GM12878 (cell line): ENCODE measurements at regions of chr10 and their contacts with region 1.

Region 1: DNA sequence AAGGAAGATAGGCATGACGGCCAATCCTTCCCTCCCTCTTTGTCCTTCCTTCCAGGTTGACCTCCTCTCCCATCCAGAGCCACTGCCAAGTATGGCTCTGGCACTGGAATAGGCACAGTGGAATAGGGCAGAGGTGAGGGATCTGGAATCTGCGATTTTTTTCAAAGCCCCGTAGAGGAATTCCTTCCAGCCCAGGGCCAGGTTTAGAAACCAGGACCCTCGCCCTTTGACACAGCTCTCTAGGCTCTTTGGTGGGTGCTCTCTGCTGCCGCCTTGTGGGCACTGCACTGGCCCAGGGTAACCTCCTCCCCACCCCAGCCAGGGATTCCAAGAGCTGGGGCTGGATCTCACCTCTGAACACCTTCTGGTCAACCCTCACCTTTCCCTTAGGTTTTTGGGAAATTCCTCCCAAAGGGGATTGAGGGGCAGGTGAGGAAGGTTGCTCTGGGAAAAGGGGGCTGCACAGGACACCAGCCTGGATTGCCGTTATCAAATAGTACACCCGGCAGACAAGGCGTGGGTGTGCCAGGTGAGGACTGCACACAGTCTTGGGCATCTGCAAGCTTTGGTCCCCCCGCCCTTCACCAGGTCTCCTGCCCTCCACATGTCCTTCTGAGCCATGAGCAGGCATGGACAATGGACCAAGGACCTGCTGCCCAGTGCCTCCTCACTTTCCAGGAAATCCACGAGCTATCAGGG is 22.8 kb downstream of the C10orf105 start:
- DNase-seq: no peak
- ATAC-seq: peak; percentile 56
- H3K4me3 ChIP-seq: no peak overlapping the region
- H3K27ac ChIP-seq: no peak overlapping the region
- H3K4me1 ChIP-seq: peaks cover 64% of the 10 kb centered on the region
- H3K27me3 ChIP-seq: no peaks in the 10 kb centered on the region
- CTCF ChIP-seq: peak; percentile 77 to 98 (median 96)
- EP300 ChIP-seq: no peak
- POLR2A ChIP-seq: no peak
- RAD21 ChIP-seq: peak; percentile 61

Region 2: GRCh38 chr10:71371750-71372166 is 325.0 kb before region 1 on chr10:
- CTCF ChIA-PET with region 1: interaction called, 30 read pairs
- POLR2A ChIA-PET with region 1: interaction called, 9 read pairs
- RAD21 ChIA-PET with region 1: interaction called, 5 read pairs
- SMC1A ChIA-PET with region 1: interaction called, 9 read pairs
- in situ Hi-C with region 1: no loop called
- intact Hi-C with region 1: no loop called
- DNase-seq: peak; percentile 56
- ATAC-seq: peak; percentile 65
- H3K4me3 ChIP-seq: no peak overlapping the region
- H3K27ac ChIP-seq: peak overlapping the region; percentile 93
- H3K4me1 ChIP-seq: peaks cover 58% of the 10 kb centered on the region
- H3K27me3 ChIP-seq: no peaks in the 10 kb centered on the region
- CTCF ChIP-seq: no peak
- EP300 ChIP-seq: no peak; a peak in 1 of 4 replicates
- POLR2A ChIP-seq: no peak
- RAD21 ChIP-seq: no peak

Region 3: DNA sequence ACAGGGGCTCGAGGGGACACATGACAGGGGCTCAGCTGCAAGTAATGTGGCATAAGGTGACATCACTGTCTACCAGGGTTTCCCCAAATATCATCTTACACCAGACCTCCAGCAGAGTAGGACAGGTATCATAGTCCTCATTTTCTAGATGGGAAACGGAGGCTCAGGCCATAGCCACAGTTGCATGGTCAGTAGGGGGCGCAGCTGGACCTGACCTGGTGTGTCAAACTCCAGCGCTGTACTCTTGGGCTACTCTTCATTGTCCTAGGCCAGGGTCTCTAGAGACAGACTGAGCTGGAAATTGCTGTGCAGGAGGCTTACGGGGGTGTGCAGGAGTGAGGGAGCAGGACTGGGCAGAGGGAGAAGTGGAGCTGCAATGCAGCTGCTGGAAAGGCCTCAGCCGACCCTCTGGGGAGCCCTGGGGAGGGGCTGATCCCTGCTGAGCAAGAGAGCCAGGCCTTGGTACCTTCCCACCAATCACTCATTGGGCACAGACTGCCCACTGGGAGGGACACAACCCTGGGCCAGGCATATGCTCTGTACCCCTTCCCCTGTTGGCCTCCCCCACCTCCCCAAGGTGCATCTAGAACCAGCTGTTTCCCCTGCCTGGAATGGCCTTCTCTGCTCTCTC is 210.2 kb before region 1 on chr10:
- CTCF ChIA-PET with region 1: interaction called, 12 read pairs
- POLR2A ChIA-PET with region 1: no interaction called
- RAD21 ChIA-PET with region 1: no interaction called
- SMC1A ChIA-PET with region 1: interaction called, 3 read pairs
- in situ Hi-C with region 1: no loop called
- intact Hi-C with region 1: loop called (anchors 5 kb)
- DNase-seq: no peak
- ATAC-seq: peak; percentile 89
- H3K4me3 ChIP-seq: no peak overlapping the region
- H3K27ac ChIP-seq: no peak overlapping the region
- H3K4me1 ChIP-seq: no peaks in the 10 kb centered on the region
- H3K27me3 ChIP-seq: peaks cover 0 to 2% of the 10 kb centered on the region in 2 experiments; a peak in 1 of 4 replicates
- CTCF ChIP-seq: peak; percentile 65 to 71 (median 71)
- EP300 ChIP-seq: no peak
- POLR2A ChIP-seq: no peak
- RAD21 ChIP-seq: peak; percentile 65

Region 4: DNA sequence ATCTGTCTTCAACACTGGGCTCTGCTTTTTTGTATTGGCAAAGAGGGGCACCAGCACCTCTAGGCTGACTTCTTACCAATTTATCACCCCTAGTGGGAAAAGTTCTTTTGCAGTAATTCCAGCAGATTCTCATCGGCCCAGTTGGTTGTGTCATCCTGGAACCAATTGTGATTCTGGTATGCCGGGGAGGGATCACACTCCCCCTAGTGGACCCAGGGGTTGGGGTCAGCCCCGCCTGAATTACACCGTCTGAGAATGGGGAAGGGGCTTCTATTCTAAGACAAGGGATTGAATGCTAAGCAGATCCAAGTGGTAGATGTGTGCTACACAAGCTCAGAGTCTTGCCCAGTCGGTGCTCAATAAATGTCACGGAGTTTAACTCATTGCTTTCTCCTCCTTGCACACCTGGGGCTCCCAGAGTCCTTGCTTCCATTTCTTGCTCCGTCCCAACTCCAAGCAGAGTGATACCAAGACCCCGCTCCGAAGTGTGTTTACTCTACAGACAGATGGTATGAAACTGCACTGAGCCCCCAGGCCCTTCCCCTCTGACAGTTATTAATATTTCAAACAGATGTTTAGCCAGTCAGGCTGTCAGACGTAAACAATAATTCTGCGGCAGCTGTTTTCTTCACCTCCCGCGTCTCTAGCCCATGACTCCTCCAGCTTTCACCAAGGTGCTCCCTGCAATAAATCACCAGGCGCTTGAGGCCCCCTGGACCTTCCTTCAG is 49.1 kb before region 1 on chr10:
- CTCF ChIA-PET with region 1: interaction called, 67 read pairs
- POLR2A ChIA-PET with region 1: interaction called, 3 read pairs
- RAD21 ChIA-PET with region 1: interaction called, 31 read pairs
- SMC1A ChIA-PET with region 1: interaction called, 10 read pairs
- in situ Hi-C with region 1: no loop called
- intact Hi-C with region 1: loop called (anchors 5 kb)
- DNase-seq: no peak
- ATAC-seq: no peak
- H3K4me3 ChIP-seq: no peak overlapping the region
- H3K27ac ChIP-seq: no peak overlapping the region
- H3K4me1 ChIP-seq: peaks cover 31% of the 10 kb centered on the region
- H3K27me3 ChIP-seq: no peaks in the 10 kb centered on the region
- CTCF ChIP-seq: peak; percentile 23 to 51 (median 38); a peak in 5 of 6 replicates
- EP300 ChIP-seq: no peak
- POLR2A ChIP-seq: no peak
- RAD21 ChIP-seq: 0 out of 2 replicates have a peak, but pooled peaks have one; percentile 13

Region 5: DNA sequence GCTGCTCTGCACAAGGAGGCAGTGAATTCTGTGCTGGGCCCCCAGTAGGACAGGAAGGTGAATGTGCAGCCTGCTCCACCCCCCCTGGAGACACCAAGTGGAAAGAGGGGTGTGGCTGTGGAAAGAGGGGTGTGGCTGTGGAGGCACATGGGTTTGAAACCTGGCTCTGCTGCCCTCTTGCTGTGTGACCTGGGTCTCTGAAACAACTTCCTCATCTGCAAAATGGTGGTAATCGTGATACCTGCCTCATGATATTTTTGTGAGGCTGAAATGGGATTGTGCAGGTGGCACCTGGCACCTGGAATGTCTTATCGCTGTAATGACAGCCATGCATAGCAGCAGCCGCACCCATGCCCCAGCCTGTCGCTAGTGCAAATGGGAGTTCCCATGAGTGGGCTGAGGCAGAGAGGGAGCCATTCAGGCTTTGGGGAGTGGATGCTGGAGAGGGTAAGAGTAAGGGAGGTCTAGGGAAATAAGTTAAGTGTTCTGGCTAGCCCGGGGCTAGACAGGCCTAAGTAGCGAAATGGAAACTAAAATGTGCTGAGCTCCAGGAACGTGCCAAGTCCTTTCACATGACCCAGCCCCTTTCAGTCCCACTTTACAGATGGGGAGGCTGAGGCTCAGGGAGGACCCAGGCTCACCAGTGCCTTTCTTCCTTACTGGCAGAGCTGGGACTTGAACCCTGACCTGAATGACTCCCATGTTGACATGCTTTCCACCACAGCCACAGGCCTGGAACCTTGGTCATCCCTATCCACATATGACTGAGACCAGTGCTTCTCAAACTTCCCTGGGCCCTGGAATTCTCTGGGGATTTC is 12.2 kb before region 1 on chr10:
- CTCF ChIA-PET with region 1: interaction called, 33 read pairs
- POLR2A ChIA-PET with region 1: interaction called, 4 read pairs
- RAD21 ChIA-PET with region 1: interaction called, 14 read pairs
- SMC1A ChIA-PET with region 1: interaction called, 3 read pairs
- in situ Hi-C with region 1: no loop called
- intact Hi-C with region 1: no loop called
- DNase-seq: no peak
- ATAC-seq: peak; percentile 75
- H3K4me3 ChIP-seq: no peak overlapping the region
- H3K27ac ChIP-seq: no peak overlapping the region
- H3K4me1 ChIP-seq: 0 out of 2 replicates have a peak, but pooled peaks cover 7% of the 10 kb centered on the region
- H3K27me3 ChIP-seq: no peaks in the 10 kb centered on the region
- CTCF ChIP-seq: no peak; a peak in 1 of 6 replicates
- EP300 ChIP-seq: no peak
- POLR2A ChIP-seq: no peak
- RAD21 ChIP-seq: no peak

Region 6: DNA sequence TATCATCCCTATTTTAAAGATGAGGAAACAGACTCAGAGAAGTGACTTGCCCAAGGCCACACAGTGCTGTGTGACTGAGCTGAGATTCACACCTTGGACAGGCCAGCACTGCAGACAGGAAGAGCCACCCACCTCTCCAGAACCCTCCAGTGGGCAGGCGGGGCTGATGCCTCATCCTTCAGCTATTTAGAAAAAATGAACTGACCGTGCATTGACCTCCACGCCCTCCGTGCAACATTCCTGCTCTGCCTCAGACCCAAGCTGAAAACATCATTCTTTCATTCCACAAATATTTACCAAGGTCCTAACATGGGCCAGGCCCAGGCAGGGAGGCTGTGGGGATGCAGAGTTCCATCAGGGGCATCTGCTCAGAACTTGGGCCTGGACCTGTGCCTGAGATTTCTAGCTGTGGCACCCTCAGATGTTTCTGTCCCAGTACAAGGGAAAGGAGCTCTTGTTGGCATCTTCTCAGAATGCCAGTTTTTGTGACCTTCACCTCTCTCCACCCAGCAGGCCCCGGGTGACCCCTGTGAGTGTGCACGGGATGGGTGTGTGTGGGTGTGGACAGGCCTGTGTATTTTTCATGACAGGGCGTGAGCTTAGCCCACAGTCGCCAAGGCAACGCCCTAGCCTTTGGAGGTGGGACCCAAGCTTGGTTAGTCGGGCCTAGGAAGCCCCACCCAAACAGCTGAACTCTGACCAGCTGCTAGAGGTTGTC is 70.1 kb after region 1 on chr10:
- CTCF ChIA-PET with region 1: interaction called, 97 read pairs
- POLR2A ChIA-PET with region 1: interaction called, 5 read pairs
- RAD21 ChIA-PET with region 1: interaction called, 53 read pairs
- SMC1A ChIA-PET with region 1: interaction called, 31 read pairs
- in situ Hi-C with region 1: no loop called
- intact Hi-C with region 1: loop called (anchors 2 kb)
- DNase-seq: no peak
- ATAC-seq: peak; percentile 12
- H3K4me3 ChIP-seq: no peak overlapping the region
- H3K27ac ChIP-seq: no peak overlapping the region
- H3K4me1 ChIP-seq: peaks cover 32% of the 10 kb centered on the region
- H3K27me3 ChIP-seq: no peaks in the 10 kb centered on the region
- CTCF ChIP-seq: no peak
- EP300 ChIP-seq: no peak
- POLR2A ChIP-seq: no peak
- RAD21 ChIP-seq: no peak

Region 7: GRCh38 chr10:72162978-72163377 is 466.2 kb after region 1 on chr10:
- CTCF ChIA-PET with region 1: no interaction called
- POLR2A ChIA-PET with region 1: no interaction called
- RAD21 ChIA-PET with region 1: no interaction called
- SMC1A ChIA-PET with region 1: no interaction called
- in situ Hi-C with region 1: no loop called
- intact Hi-C with region 1: no loop called
- DNase-seq: peak; percentile 88
- ATAC-seq: peak; percentile 95
- H3K4me3 ChIP-seq: no peak overlapping the region
- H3K27ac ChIP-seq: peak overlapping the region; percentile 54; the same call in 1 of the 2 replicates
- H3K4me1 ChIP-seq: peaks cover 10% of the 10 kb centered on the region
- H3K27me3 ChIP-seq: no peaks in the 10 kb centered on the region
- CTCF ChIP-seq: no peak
- EP300 ChIP-seq: peak; percentile 80 to 83; a peak in 3 of 4 replicates
- POLR2A ChIP-seq: no peak
- RAD21 ChIP-seq: no peak

Region 8: DNA sequence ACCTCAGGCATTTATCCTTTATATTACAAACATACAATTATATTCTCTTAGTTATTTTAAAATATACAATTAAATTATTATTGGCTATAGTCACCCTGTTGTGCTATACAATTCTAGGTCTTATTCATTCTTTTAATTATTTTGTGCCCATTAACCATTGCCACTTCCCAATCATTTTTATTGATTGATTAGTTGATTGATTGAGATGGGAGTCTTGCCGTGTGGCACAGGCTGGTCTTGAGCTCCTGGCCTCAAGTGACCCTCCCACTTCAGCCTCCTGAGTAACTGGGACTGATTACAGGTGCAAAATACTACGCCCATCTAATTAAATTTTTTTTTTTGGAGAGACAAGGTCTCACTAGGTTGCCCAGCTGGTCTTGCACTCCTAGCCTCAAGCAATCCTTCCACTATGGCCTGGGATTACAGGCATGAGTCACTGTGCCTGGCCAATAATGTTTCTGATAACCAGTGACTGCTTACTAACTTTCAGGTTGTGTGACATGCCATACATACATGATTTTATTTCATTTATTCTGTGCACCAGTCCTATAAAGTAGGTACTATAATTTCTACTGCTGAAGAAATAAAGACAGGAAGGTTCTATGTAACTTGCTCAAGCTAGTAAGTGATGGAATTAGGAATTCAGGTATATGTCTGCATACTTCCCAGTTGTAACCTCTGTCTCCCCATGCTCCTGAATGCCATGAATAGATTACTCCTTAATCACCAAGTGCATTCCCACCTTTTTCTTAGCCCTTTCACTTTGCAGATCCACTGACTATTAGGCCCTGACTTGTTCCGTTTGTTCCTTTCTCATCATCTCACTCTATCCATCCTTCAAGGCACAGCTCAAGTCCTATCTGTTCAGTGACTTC is 1023.2 kb after region 1 on chr10:
- CTCF ChIA-PET with region 1: no interaction called
- POLR2A ChIA-PET with region 1: no interaction called
- RAD21 ChIA-PET with region 1: no interaction called
- SMC1A ChIA-PET with region 1: no interaction called
- in situ Hi-C with region 1: no loop called
- intact Hi-C with region 1: no loop called
- DNase-seq: no peak
- ATAC-seq: no peak
- H3K4me3 ChIP-seq: no peak overlapping the region
- H3K27ac ChIP-seq: no peak overlapping the region
- H3K4me1 ChIP-seq: no peaks in the 10 kb centered on the region
- H3K27me3 ChIP-seq: no peaks in the 10 kb centered on the region
- CTCF ChIP-seq: no peak
- EP300 ChIP-seq: no peak
- POLR2A ChIP-seq: no peak
- RAD21 ChIP-seq: no peak